Right ventricle myocardium inferior (tissue), 1 donor: ENCODE measurements at regions of chr17 and their contacts with region 1.

Region 1: DNA sequence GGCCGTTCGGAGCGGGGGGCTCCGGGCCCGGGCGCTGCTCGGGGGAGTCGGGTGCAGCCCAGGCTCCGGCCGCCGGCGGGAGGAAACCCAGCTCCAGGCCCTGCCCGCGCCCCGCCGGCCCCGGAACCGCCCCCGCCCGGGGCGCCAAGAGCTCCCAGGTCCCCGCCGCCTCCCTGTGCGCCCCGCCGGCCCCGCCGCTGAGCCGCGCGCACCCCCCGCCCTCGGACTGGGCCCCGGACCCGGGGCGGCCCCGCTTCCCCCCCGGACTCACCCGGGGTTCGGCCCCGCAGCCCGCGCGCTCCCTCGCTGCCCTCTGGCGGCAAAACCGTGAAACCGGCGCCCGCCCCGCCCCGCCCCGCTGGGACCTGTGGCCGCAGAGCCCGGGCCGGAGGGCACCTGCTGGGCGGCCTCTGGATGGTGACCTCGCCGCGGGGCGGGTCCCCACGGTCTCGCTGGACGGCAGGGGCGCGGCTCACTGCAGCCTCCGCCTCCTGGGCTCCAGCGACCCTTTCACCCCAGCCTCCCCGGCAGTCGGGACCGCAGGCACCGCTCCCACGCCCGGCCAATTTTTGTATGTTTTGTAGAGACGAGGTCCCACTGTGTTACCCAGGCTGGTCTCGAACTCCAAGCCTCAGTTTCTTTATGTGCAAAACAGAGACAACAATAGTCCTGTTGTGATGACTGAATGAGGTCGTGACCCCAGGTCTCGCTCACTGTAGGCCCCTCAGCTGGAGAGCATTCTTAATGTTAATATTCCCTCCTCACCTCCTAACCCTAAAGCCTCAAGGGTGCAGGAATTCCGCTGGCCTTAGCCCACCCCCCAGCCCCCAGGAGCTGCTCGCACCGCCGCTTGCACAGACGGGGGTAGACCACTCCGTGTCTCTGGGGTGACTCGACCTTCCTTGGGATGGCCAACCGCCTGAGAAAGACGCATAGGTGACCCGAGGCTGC is 33.6 kb upstream of the RPH3AL start:
- DNase-seq: peak; percentile 92
- ATAC-seq: peak; percentile 82

Region 2: GRCh38 chr17:164303-165235 is 221.6 kb before region 1 on chr17:
- intact Hi-C with region 1: loop called (anchors 2 kb)
- DNase-seq: no peak
- ATAC-seq: peak; percentile 79

Region 3: DNA sequence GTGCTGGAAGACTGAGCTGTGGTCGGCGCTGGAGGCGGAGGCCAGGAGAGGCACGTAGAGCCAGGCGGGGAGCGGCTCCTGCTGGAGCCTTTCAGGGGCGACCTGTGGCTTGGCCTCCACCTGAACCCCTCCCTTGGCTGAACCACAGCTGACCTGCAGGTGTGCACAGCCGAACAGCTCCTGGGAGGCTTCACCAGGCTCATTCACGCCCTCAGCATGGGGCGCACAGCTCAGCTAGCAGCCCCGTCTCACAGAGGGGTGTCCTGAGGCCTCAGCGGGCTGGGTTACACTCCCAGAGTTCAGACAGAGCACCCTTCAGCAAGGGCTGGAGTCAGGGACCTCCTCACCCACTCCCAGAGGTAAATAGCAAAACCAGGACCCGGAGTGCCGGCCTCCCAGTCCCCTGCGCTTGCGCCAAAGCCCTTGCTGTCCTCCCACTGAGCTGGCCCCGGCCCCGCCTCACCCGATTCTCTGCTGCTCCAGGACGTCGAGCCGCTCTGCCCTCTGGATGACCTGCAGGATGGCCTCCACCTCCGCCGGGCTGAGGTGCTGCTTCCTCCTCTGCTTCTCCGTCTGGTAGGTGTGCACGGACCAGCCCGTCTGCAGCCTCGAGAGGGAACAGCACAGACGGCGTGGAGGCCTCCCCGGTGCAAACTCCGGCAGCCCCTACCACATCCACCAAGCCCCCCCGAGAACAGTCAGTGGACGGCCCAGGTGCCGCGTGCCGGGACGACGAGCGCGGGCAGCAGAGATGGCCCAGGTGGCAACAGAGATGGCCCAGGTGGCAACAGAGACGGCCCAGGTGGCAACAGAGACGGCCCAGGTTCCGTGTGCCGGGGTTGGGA is 65.2 kb before region 1 on chr17:
- intact Hi-C with region 1: no loop called
- DNase-seq: peak; percentile 54
- ATAC-seq: no peak

Region 4: GRCh38 chr17:333626-334396 is 52.4 kb before region 1 on chr17:
- intact Hi-C with region 1: loop called (anchors 2 kb)
- DNase-seq: peak; percentile 89
- ATAC-seq: peak; percentile 87

Region 5: GRCh38 chr17:409848-410545 is 23.8 kb after region 1 on chr17:
- intact Hi-C with region 1: no loop called
- DNase-seq: peak; percentile 100
- ATAC-seq: peak; percentile 96

Region 6: DNA sequence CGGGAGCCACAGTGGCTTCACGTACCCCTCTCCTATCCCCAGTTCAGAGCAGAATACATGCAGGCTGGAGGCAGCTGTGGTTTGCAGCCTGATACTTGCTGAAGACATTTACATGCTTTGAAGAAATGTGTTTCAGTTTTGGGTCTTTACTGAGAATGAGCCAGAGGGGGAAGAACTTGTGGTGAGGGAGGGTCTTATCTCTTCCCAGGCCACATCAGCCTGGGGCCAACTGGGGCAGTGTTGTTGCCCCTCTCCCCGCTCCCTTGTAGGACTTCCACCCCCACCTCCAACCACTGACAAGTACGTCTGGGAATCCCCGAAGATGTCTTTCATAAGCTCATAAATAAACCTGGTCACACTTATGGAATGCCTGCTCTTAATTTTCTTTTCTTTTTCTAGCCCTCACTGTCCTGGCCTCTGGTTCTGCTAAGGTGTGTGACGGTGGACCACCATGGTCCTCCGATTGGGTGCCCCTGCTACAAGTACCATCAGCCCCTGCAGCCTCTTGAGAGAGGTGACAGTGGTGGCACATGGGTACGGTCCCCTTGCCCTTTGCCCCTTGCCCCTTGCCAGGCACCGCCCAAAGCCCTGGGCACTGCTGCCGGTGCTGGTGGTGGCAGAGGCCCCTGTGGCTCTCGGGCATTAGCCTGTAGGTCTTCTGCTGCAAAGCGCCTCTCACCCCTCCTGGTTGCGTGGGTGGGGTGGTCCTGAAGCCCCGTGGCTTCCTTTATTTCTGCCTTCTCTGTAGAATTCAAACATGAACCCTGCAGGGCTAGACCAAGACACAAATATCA is 111.2 kb after region 1 on chr17:
- intact Hi-C with region 1: no loop called
- DNase-seq: no peak
- ATAC-seq: no peak